Posterior vena cava (tissue), 2 donors: ENCODE measurements at regions of chr11 and their contacts with region 1.

Region 1: DNA sequence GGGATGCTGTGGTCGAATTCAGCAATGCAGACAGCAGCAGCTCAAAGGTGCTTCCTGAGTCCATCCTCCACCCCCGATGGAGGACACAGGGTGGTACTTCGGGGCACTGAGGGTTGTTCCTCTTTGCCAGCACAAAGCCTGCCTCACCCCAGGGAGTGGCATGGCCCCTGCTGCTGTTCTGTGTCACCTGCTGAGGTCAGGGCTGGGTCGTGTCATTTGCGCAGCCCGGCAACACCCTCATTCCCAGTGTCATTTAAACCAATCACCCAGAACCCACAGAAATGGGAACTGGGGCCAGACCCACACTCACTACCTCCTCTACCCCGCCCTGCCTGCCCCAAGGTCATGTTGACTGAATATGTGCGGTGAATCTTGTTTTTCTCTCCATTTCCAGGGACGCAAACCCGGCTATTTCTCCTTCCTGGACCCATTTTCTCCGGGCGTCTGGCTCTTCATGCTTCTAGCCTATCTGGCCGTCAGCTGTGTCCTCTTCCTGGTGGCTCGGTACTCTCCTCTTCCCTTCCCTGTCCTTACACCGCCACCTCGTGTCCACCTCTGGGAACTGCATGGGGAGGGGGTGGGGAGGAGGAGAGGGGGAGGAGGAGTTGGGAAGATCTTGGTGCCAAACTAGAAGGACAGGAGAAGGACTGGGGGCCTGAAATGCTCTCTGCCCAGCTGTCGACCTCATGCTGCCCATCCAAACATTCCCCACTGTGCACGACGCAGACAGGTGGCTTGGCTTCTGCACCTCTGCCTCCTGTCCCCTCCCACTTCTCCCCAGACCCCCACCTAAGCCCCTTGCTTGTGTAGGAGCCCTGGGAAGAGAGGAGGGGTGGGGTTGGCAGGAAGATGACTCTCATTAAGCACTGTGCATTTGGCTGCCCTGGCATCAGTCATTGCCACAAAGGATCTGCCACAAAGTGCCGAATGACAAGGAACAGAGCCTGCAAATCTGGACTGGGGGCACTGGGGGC is 71.2 kb upstream of the TBCEL start:
- DNase-seq: peak; percentile 92

Region 2: DNA sequence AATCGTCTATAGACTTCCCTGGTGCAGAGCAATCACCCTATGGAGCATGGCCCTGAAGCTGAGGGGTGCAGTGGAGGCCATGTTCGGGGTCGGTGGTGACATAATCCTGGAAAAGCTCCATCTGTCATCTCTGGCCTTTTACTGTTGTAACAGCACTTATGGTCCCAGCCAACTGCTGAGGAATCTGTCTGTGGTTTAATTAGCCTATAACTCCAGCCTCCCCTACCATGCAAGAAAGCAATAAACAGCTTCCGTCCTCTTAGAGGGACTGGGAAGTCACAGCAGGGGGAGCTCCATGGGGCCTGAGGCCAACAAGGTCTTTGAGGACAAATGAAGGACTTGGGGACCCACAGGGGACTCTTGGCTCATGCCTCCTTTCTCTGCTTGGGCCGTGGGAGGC is 1064.6 kb before region 1 on chr11:
- intact Hi-C with region 1: loop called in 1 of 2 experiments (anchors 10 kb)
- DNase-seq: no peak

Region 3: GRCh38 chr11:120511116-120511819 is 441.5 kb before region 1 on chr11 and contains the start of gene GRIK4:
- intact Hi-C with region 1: loop called (anchors 5 kb)
- DNase-seq: peak; percentile 96
- total RNA-seq, gene GRIK4: 0.19 TPM in 1 of 2 donors, not detected in the other

Region 4: GRCh38 chr11:120682866-120683265 is 269.9 kb before region 1 on chr11:
- intact Hi-C with region 1: loop called in 1 of 2 experiments (anchors 10 kb)
- DNase-seq: no peak

Region 5: GRCh38 chr11:120964857-120965256 is 12.1 kb after region 1 on chr11:
- intact Hi-C with region 1: no loop called
- DNase-seq: no peak